CD8-positive, alpha-beta T cell (primary cell): ENCODE measurements at regions of chr19 and their contacts with region 1.

Region 1: GRCh38 chr19:41795031-41795461 is 1.3 kb upstream of the CEACAM3 start:
- DNase-seq: peak; percentile 29 to 75 (median 59)
- ATAC-seq: peak; percentile 99
- H3K4me3 ChIP-seq: no peak overlapping the region
- H3K4me3 Mint-ChIP-seq: no peak overlapping the region
- H3K27ac ChIP-seq: no peak overlapping the region
- H3K27ac Mint-ChIP-seq: no peak overlapping the region
- H3K4me1 ChIP-seq: no peaks in the 10 kb centered on the region
- H3K4me1 Mint-ChIP-seq: peaks cover 3% of the 10 kb centered on the region
- H3K27me3 ChIP-seq: no peaks in the 10 kb centered on the region
- H3K27me3 Mint-ChIP-seq: peaks cover 29% of the 10 kb centered on the region
- CTCF ChIP-seq: peak; percentile 87

Region 2: GRCh38 chr19:41753936-41754529 is 41.0 kb before region 1 on chr19:
- CTCF ChIA-PET with region 1: interaction called, 70 read pairs
- POLR2A ChIA-PET with region 1: no interaction called
- intact Hi-C with region 1: no loop called
- DNase-seq: peak; percentile 46 to 78 (median 72)
- ATAC-seq: peak; percentile 94
- H3K4me3 ChIP-seq: no peak overlapping the region
- H3K4me3 Mint-ChIP-seq: no peak overlapping the region
- H3K27ac ChIP-seq: no peak overlapping the region
- H3K27ac Mint-ChIP-seq: no peak overlapping the region
- H3K4me1 ChIP-seq: no peaks in the 10 kb centered on the region
- H3K4me1 Mint-ChIP-seq: peaks cover 3% of the 10 kb centered on the region
- H3K27me3 ChIP-seq: peaks cover 0 to 3% of the 10 kb centered on the region in 2 experiments
- H3K27me3 Mint-ChIP-seq: peaks cover 31% of the 10 kb centered on the region
- CTCF ChIP-seq: peak; percentile 69

Region 3: DNA sequence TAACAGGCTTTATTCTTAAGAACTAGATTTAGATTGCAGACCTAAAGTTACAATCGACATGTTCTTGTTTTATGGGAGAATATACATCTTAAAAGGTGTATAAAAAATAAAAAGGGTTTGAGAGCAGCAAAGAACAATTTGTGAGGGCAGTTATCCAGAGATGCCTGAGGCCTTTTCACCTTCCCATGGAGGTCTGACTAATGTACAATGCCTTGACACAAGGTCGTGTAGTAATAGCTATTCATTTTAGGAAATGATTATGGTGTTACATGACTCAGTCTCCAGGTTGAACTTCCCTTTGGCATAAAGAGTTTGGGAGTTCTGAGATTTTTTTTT is 19.7 kb before region 1 on chr19:
- CTCF ChIA-PET with region 1: interaction called, 10 read pairs
- POLR2A ChIA-PET with region 1: interaction called, 3 read pairs
- intact Hi-C with region 1: no loop called
- DNase-seq: no peak
- ATAC-seq: no peak
- H3K4me3 ChIP-seq: no peak overlapping the region
- H3K4me3 Mint-ChIP-seq: no peak overlapping the region
- H3K27ac ChIP-seq: no peak overlapping the region
- H3K27ac Mint-ChIP-seq: no peak overlapping the region
- H3K4me1 ChIP-seq: peaks cover 32% of the 10 kb centered on the region
- H3K4me1 Mint-ChIP-seq: peaks cover 37% of the 10 kb centered on the region
- H3K27me3 ChIP-seq: peaks cover 6 to 10% of the 10 kb centered on the region in 2 experiments
- H3K27me3 Mint-ChIP-seq: peaks cover 70% of the 10 kb centered on the region
- CTCF ChIP-seq: no peak

Region 4: DNA sequence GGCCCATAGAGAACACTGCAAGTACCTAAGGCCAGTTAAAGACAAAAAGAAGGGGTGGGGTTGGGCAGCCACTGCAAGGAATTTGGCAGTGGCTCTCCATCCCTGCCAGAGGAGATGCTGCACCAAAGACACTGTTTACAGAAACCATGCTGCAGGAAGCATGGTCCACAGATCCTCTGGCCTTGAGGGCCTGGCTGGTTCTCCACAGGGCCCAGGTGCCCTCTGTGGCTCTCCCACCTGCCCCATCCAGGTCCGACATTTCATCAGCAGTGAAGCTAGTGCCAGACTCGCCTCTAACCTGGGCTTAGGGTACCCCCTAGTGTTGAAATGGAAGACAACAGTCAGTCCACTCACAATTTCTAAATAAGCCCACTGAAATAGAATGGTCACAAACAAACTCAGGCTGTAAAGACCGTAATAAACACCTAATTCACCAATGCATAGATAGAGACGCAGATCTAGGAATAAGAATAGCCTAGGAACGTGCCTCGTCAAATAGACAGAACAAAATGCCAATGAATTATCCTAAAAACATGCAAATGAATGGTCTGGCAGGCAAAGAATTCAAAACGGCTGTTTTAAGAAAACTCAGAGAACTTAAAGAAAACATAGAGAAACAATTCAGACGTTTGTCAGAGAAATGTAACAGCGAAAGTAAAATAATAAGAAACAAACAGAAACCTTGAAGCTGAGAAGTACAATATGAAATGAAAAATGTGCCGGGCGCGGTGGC is 26.1 kb after region 1 on chr19:
- CTCF ChIA-PET with region 1: interaction called, 46 read pairs
- POLR2A ChIA-PET with region 1: no interaction called
- intact Hi-C with region 1: loop called (anchors 1 kb)
- DNase-seq: peak in 8 of 9 experiments; percentile 6 to 69 (median 44)
- ATAC-seq: peak; percentile 82
- H3K4me3 ChIP-seq: no peak overlapping the region
- H3K4me3 Mint-ChIP-seq: no peak overlapping the region
- H3K27ac ChIP-seq: no peak overlapping the region
- H3K27ac Mint-ChIP-seq: no peak overlapping the region
- H3K4me1 ChIP-seq: no peaks in the 10 kb centered on the region
- H3K4me1 Mint-ChIP-seq: no peaks in the 10 kb centered on the region
- H3K27me3 ChIP-seq: peaks cover 0 to 2% of the 10 kb centered on the region in 2 experiments
- H3K27me3 Mint-ChIP-seq: peaks cover 18% of the 10 kb centered on the region
- CTCF ChIP-seq: peak; percentile 42

Region 5: GRCh38 chr19:41951686-41952172 is 156.7 kb after region 1 on chr19:
- CTCF ChIA-PET with region 1: interaction called, 11 read pairs
- POLR2A ChIA-PET with region 1: no interaction called
- intact Hi-C with region 1: loop called (anchors 1 kb)
- DNase-seq: peak; percentile 73 to 97 (median 89)
- ATAC-seq: peak; percentile 88
- H3K4me3 ChIP-seq: no peak overlapping the region
- H3K4me3 Mint-ChIP-seq: no peak overlapping the region
- H3K27ac ChIP-seq: no peak overlapping the region
- H3K27ac Mint-ChIP-seq: peak overlapping the region; percentile 85
- H3K4me1 ChIP-seq: peaks cover 15% of the 10 kb centered on the region
- H3K4me1 Mint-ChIP-seq: peaks cover 31% of the 10 kb centered on the region
- H3K27me3 ChIP-seq: no peaks in the 10 kb centered on the region
- H3K27me3 Mint-ChIP-seq: no peaks in the 10 kb centered on the region
- CTCF ChIP-seq: peak; percentile 96

Region 6: DNA sequence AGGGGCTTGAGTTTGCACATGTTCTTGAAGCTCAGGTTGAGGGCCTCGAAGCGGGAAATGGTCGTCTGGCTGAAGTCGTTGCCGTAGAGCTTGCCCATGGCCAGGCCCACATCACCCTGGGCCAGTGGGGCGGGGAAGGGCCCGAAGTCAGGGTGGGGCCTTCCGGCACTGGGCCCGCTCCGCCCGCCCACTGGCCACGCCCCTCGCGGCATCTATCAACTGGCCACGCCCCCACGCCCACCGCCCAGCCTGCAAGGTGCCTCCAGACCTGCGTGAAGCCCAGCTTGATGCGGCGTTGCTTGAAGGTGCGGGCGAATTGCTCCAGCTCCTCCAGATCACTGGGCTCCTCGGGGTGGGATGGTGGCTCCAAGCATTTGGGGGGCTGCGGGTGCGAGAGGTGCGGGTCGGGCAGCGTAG is 300.8 kb after region 1 on chr19:
- CTCF ChIA-PET with region 1: no interaction called
- POLR2A ChIA-PET with region 1: no interaction called
- intact Hi-C with region 1: no loop called
- DNase-seq: no peak
- ATAC-seq: no peak
- H3K4me3 ChIP-seq: no peak overlapping the region
- H3K4me3 Mint-ChIP-seq: no peak overlapping the region
- H3K27ac ChIP-seq: no peak overlapping the region
- H3K27ac Mint-ChIP-seq: no peak overlapping the region
- H3K4me1 ChIP-seq: no peaks in the 10 kb centered on the region
- H3K4me1 Mint-ChIP-seq: peaks cover 7% of the 10 kb centered on the region
- H3K27me3 ChIP-seq: no peaks in the 10 kb centered on the region
- H3K27me3 Mint-ChIP-seq: no peaks in the 10 kb centered on the region
- CTCF ChIP-seq: no peak